IMR-90 (cell line): ENCODE measurements at regions of chr4 and their contacts with region 1.

Region 1: GRCh38 chr4:39559626-39560025 is 32.4 kb upstream of the UGDH start:
- DNase-seq: no peak
- ATAC-seq: no peak
- H3K4me3 ChIP-seq: no peak overlapping the region
- H3K27ac ChIP-seq: peak overlapping the region; percentile 48; the same call in 1 of the 2 replicates
- H3K4me1 ChIP-seq: peaks cover 8% of the 10 kb centered on the region
- H3K27me3 ChIP-seq: no peaks in the 10 kb centered on the region
- CTCF ChIP-seq: no peak
- POLR2A ChIP-seq: no peak
- RAD21 ChIP-seq: no peak

Region 2: DNA sequence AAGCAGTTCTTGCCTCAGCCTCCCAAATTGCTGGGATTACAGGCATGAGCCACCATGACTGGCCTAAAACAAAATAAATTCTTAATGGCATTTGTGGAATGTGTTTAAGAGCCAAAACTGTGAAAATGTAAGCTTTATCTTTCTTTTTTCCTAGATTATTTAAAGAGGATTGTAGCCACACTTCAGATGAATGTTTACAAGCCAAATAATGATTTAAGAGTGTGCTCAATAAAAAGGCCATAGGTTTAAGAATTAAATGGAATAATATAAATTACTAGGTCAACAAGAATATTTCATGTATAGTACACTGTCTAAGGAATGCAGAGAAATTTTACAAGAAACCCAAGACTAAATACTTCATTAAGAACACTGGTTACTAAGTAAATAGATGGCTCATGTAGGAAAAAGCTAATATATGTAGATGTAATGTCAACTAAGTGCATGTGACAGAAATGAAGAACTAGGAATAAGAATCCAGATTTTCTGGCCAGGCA is 11.2 kb before region 1 on chr4:
- CTCF ChIA-PET with region 1: interaction called, 3 read pairs
- POLR2A ChIA-PET with region 1: no interaction called
- dilution Hi-C with region 1: no loop called
- in situ Hi-C with region 1: no loop called
- intact Hi-C with region 1: loop called (anchors 1 kb)
- DNase-seq: peak; percentile 45
- ATAC-seq: peak; percentile 61
- H3K4me3 ChIP-seq: no peak overlapping the region
- H3K27ac ChIP-seq: peak overlapping the region; percentile 87; the same call in 1 of the 2 replicates
- H3K4me1 ChIP-seq: peaks cover 13% of the 10 kb centered on the region
- H3K27me3 ChIP-seq: no peaks in the 10 kb centered on the region
- CTCF ChIP-seq: no peak
- POLR2A ChIP-seq: no peak
- RAD21 ChIP-seq: no peak

Region 3: GRCh38 chr4:39682138-39682537 is 122.5 kb after region 1 on chr4:
- CTCF ChIA-PET with region 1: no interaction called
- POLR2A ChIA-PET with region 1: interaction called, 20 read pairs
- dilution Hi-C with region 1: no loop called
- in situ Hi-C with region 1: no loop called
- intact Hi-C with region 1: no loop called
- DNase-seq: no peak
- ATAC-seq: no peak
- H3K4me3 ChIP-seq: no peak overlapping the region
- H3K27ac ChIP-seq: no peak overlapping the region
- H3K4me1 ChIP-seq: no peaks in the 10 kb centered on the region
- H3K27me3 ChIP-seq: no peaks in the 10 kb centered on the region
- CTCF ChIP-seq: no peak
- POLR2A ChIP-seq: no peak
- RAD21 ChIP-seq: no peak